PC-9 (cell line): ENCODE measurements at regions of chr17 and their contacts with region 1.

Region 1: GRCh38 chr17:38584350-38584925 is 21.3 kb downstream of the SRCIN1 start:
- DNase-seq: peak; percentile 81 to 91
- H3K4me3 ChIP-seq: peak overlapping the region; percentile 41; the same call in 1 of the 2 replicates
- H3K27ac ChIP-seq: peak overlapping the region; percentile 84
- H3K4me1 ChIP-seq: peaks cover 57% of the 10 kb centered on the region
- H3K27me3 ChIP-seq: no peaks in the 10 kb centered on the region
- CTCF ChIP-seq: peak; percentile 95

Region 2: DNA sequence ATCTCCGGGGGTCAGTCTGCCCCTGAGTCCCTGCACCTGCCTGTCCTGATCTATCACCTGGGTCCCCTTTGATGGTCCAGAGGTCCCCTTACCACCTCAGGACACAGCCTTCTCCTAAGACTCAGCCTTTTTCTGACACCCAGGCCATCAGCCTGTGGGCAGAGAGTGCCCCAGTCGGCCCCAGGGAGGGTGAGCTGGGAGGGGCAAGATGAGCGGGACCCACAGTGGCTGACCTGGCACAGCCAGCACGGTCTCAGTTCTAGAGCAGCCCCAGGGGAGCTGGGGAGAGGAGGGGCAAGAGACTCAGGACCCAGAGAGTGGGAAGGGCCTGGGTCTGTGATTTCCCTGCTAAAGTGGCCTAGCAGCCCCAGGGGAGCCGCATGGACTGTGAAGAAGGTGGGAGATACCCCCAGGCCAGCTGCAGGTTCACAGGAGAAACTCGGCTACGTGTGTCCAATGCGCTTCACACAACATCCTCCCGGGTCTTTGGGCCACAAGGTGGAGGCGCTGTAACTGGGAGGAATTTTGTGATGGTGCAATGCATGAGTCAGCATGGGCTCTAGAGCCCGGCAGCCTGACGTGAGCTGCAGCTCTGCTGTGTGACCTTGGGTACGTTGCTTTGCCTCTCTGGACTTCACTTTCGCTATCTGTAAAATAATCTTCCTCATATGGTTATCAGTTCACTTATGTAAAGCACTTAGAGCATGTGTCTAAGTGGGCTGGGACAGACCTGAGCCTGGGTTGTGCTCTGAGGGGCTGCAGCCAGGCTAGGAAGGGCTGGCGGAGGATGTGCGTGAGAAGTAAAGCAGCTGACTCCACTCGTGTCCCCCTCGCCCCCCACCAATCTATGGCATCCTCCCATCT is 1714.3 kb before region 1 on chr17:
- CTCF ChIA-PET with region 1: no interaction called
- POLR2A ChIA-PET with region 1: no interaction called
- intact Hi-C with region 1: no loop called
- DNase-seq: peak in 1 of 2 experiments; percentile 40
- H3K4me3 ChIP-seq: no peak overlapping the region
- H3K27ac ChIP-seq: no peak overlapping the region
- H3K4me1 ChIP-seq: no peaks in the 10 kb centered on the region
- H3K27me3 ChIP-seq: no peaks in the 10 kb centered on the region
- CTCF ChIP-seq: no peak

Region 3: DNA sequence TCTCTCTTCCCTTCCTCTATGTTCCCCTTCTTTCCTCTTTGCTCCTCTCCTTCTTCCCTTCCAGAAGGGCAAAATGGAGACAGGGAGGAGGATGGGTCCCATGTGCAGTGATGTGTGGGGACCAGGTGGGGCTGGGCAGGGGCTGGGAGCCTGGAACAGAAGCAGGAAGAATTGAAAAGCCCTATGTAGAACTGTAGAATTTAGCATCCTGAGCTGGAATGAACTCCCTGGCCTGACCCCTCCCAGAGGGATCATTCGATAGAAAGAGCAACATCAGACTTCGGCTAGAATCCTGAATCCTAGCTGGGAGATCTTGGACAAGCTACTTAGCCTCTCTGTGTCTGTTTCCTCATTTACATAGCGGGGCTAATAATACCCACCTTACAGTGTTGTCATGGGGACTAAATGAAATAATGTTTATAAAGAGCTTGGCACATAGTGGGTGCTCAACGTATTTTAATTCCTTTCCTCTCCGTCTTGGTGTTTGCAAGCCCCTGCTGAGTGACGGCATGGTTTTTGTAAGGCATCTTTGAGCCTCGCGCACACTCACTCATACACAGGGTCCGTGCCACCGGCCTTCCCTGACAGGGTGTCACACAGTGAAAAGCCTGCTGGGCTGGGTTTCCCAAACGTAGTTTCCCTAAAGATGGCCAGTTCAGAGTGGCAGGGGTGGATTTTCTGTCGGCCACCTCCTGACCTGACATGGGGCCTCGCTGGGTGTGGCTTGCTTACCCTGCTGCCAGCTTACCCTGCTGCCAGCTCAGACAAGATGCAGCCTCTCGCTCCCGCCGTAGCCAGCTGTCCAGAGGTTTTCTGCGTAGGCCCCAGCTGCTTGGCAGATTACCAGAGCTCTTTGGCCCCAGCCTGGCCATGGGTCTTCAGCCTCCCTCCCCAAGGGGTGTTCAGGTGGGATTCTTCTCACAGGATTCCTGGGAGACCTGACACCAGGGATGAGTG is 162.3 kb before region 1 on chr17:
- CTCF ChIA-PET with region 1: interaction called, 5 read pairs
- POLR2A ChIA-PET with region 1: no interaction called
- intact Hi-C with region 1: loop called (anchors 2 kb)
- DNase-seq: no peak
- H3K4me3 ChIP-seq: no peak overlapping the region
- H3K27ac ChIP-seq: no peak overlapping the region
- H3K4me1 ChIP-seq: peaks cover 12% of the 10 kb centered on the region
- H3K27me3 ChIP-seq: peaks cover 20% of the 10 kb centered on the region; the same call in 1 of the 2 replicates
- CTCF ChIP-seq: no peak

Region 4: GRCh38 chr17:38550661-38551060 is 33.8 kb before region 1 on chr17:
- CTCF ChIA-PET with region 1: no interaction called
- POLR2A ChIA-PET with region 1: no interaction called
- intact Hi-C with region 1: no loop called
- DNase-seq: peak in 1 of 2 experiments; percentile 44
- H3K4me3 ChIP-seq: no peak overlapping the region
- H3K27ac ChIP-seq: no peak overlapping the region
- H3K4me1 ChIP-seq: peaks cover 16% of the 10 kb centered on the region
- H3K27me3 ChIP-seq: no peaks in the 10 kb centered on the region
- CTCF ChIP-seq: no peak

Region 5: DNA sequence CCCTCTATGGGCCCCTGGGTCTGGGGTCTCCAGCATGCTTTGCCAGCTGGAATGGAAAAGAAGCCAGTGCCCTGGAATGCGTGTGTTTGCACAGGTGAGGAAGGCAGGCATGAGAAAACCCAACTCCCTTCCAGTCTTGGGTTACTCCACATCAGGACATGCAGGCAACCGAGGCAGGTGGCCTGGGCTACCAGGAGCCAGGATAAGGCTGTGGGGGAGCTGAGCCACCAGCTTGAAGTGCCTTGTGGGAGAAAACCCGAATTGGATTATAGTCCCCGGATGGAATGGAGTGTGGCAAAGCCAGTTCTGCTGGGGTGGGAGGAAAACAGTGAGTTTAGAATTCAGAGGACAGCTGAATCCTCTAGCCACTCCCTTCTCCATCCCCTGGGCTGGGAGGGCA is 14.1 kb after region 1 on chr17:
- CTCF ChIA-PET with region 1: interaction called, 20 read pairs
- POLR2A ChIA-PET with region 1: interaction called, 3 read pairs
- intact Hi-C with region 1: no loop called
- DNase-seq: peak; percentile 82 to 87
- H3K4me3 ChIP-seq: no peak overlapping the region
- H3K27ac ChIP-seq: no peak overlapping the region
- H3K4me1 ChIP-seq: peaks cover 4% of the 10 kb centered on the region; the same call in 1 of the 2 replicates
- H3K27me3 ChIP-seq: no peaks in the 10 kb centered on the region
- CTCF ChIP-seq: no peak

Region 6: GRCh38 chr17:38616361-38616760 is 31.9 kb after region 1 on chr17:
- CTCF ChIA-PET with region 1: interaction called, 19 read pairs
- POLR2A ChIA-PET with region 1: no interaction called
- intact Hi-C with region 1: no loop called
- DNase-seq: no peak
- H3K4me3 ChIP-seq: no peak overlapping the region
- H3K27ac ChIP-seq: no peak overlapping the region
- H3K4me1 ChIP-seq: 0 out of 2 replicates have a peak, but pooled peaks cover 8% of the 10 kb centered on the region
- H3K27me3 ChIP-seq: no peaks in the 10 kb centered on the region
- CTCF ChIP-seq: no peak